Endothelial cell of umbilical vein (primary cell): ENCODE measurements at regions of chr7 and their contacts with region 1.

Region 1: GRCh38 chr7:75971961-75972763 is 22.2 kb downstream of the TMEM120A start:
- DNase-seq: no peak
- H3K4me3 ChIP-seq: no peak overlapping the region
- H3K27ac ChIP-seq: no peak overlapping the region
- H3K4me1 ChIP-seq: no peaks in the 10 kb centered on the region
- H3K27me3 ChIP-seq: no peaks in the 10 kb centered on the region
- CTCF ChIP-seq: no peak
- POLR2A ChIP-seq: no peak

Region 2: DNA sequence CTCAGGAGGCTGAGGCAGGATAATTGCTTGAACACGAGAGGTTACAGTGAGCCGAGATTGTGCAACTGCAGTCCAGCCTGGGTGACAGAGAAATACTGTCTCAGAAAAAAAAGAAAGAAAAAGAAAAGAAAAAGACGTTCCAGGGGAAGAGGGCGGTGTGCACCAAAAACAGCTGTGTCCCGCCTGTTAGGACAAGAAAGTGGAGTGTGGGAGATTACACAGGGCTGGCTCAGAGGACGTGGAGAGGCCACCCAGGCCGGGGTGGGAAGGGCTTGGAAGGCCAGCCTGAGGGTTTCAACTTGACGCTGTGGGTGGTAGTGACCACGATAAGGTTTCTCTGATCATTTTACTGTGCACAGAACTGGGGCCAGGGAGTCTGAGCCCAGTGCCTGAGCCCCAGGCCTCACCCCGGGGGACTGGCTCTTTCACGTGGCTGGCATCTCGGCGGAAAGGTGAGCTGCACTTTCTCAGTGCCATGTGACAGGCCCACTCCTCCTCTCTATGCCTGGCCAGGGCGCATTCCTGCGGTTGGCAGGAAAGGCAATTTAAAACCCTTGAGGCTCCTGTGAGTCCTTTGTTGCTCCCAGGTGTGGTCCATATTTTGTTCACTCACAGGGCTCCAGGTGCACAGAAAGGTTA is 79.4 kb before region 1 on chr7:
- CTCF ChIA-PET with region 1: no interaction called
- POLR2A ChIA-PET with region 1: no interaction called
- dilution Hi-C with region 1: no loop called
- intact Hi-C with region 1: no loop called
- DNase-seq: no peak
- H3K4me3 ChIP-seq: no peak overlapping the region
- H3K27ac ChIP-seq: no peak overlapping the region
- H3K4me1 ChIP-seq: no peaks in the 10 kb centered on the region
- H3K27me3 ChIP-seq: no peaks in the 10 kb centered on the region
- CTCF ChIP-seq: no peak
- POLR2A ChIP-seq: no peak

Region 3: DNA sequence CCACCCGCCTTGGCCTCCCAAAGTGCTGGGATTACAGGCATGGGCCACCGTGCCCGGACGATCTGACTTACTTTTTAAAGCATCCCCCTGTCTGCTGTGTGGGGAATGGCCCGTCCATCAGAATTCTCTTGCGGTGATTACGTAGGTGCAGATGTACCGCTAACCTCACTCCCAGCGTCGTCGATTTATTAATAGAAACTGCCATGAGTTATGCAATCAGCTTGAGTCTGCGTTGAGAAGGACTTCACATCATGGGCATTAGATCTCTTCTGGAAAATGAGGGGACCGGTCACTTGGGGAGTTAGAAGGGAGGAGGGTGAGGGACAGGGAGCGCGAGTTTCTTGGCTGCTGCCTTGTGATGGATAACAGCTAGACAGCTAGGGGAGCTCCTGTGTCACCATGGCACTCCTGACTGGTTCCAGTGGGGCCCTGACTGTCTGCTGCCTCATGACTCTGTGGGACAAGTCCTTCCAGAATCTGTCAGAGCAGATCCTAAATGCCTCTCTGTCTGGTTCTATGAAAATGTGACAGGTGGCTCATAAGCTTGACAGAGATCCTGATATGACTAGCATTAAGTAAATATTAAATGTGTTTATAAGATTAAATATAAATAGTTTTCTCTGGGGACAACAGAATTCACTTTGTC is 21.9 kb before region 1 on chr7:
- CTCF ChIA-PET with region 1: no interaction called
- POLR2A ChIA-PET with region 1: no interaction called
- dilution Hi-C with region 1: no loop called
- intact Hi-C with region 1: no loop called
- DNase-seq: no peak
- H3K4me3 ChIP-seq: no peak overlapping the region
- H3K27ac ChIP-seq: no peak overlapping the region
- H3K4me1 ChIP-seq: peaks cover 3% of the 10 kb centered on the region
- H3K27me3 ChIP-seq: no peaks in the 10 kb centered on the region
- CTCF ChIP-seq: no peak
- POLR2A ChIP-seq: no peak

Region 4: DNA sequence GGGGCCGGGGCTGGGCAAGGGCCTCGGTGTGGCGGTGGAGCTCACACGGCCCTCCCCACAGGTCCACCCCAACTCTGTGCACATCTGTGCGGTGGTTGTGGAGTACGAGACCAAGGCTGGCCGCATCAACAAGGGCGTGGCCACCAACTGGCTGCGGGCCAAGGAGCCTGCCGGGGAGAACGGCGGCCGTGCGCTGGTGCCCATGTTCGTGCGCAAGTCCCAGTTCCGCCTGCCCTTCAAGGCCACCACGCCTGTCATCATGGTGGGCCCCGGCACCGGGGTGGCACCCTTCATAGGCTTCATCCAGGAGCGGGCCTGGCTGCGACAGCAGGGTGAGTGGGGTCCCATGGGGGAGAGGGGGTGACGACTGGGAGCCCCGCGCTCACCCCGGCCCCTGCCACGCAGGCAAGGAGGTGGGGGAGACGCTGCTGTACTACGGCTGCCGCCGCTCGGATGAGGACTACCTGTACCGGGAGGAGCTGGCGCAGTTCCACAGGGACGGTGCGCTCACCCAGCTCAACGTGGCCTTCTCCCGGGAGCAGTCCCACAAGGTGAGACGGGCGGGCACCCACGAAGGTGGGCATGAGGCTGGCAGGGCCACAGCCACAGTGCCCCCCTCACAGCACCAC is 13.5 kb after region 1 on chr7:
- CTCF ChIA-PET with region 1: interaction called, 3 read pairs
- POLR2A ChIA-PET with region 1: interaction called, 14 read pairs
- dilution Hi-C with region 1: no loop called
- intact Hi-C with region 1: no loop called
- DNase-seq: no peak
- H3K4me3 ChIP-seq: no peak overlapping the region
- H3K27ac ChIP-seq: no peak overlapping the region
- H3K4me1 ChIP-seq: no peaks in the 10 kb centered on the region
- H3K27me3 ChIP-seq: no peaks in the 10 kb centered on the region
- CTCF ChIP-seq: no peak
- POLR2A ChIP-seq: no peak